ENCODE measurements at regions of chr15 and their contacts with region 1.

Region 1: GRCh38 chr15:101088788-101089583 is 162.9 kb downstream of the CHSY1 start:
- DNase-seq: peak; percentile 34 to 98
- H3K4me3 ChIP-seq: no peak overlapping the region
- H3K27ac ChIP-seq: no peak overlapping the region
- H3K4me1 ChIP-seq: peaks cover 0 to 1% (median 0%) of the 10 kb centered on the region in 4 experiments; a peak in 3 of 7 replicates
- H3K27me3 ChIP-seq: no peaks in the 10 kb centered on the region
- CTCF ChIP-seq: peak; percentile 89 to 95 (median 89)
- EP300 ChIP-seq: 0 out of 3 replicates have a peak, but pooled peaks of 1 of the 2 experiments have one; percentile 37
- POLR2A ChIP-seq: no peak
- RAD21 ChIP-seq: peak; percentile 81 to 91

Region 2: DNA sequence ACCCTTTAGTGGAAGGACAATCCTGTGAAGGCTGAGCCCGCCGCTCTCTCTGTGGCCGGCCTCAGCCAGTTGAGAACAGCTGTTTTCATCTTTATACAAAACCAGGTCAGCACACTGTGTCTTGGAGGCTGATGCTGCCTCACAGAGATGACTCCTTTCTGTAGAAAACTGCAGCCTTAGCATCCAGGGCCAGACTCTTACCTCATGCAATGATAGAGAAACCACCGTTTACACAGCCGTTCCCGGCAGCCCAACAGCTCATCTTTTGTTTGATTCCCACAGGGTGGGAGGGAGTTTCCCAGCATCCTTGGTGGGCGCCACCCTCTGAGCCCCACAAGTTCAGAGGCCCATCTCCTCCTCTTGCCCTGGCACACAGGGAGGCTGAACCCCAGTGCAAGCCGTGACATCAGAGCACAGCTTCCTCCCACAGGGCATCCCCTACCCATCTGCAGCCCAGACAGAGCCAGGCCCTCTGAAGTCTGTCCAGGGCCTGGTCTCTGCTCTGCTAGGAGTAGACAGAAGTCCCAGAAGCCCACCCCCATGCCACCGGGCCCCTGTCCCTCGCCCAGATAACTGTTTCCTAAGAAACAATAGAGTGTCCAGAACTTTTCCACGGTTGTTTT is 64.8 kb before region 1 on chr15:
- CTCF ChIA-PET with region 1: interaction called, 16 read pairs
- POLR2A ChIA-PET with region 1: no interaction called
- DNase-seq: no peak
- H3K4me3 ChIP-seq: no peak overlapping the region
- H3K27ac ChIP-seq: no peak overlapping the region
- H3K4me1 ChIP-seq: no peaks in the 10 kb centered on the region; a peak in 1 of 7 replicates
- H3K27me3 ChIP-seq: no peaks in the 10 kb centered on the region
- CTCF ChIP-seq: no peak
- EP300 ChIP-seq: no peak
- POLR2A ChIP-seq: no peak
- RAD21 ChIP-seq: no peak

Region 3: GRCh38 chr15:101062471-101063171 is 26.4 kb before region 1 on chr15:
- CTCF ChIA-PET with region 1: interaction called, 30 read pairs
- POLR2A ChIA-PET with region 1: interaction called, 13 read pairs
- DNase-seq: peak in 1 of 2 experiments; percentile 63
- H3K4me3 ChIP-seq: no peak overlapping the region
- H3K27ac ChIP-seq: no peak overlapping the region
- H3K4me1 ChIP-seq: peaks cover 13 to 33% (median 21%) of the 10 kb centered on the region in 4 experiments
- H3K27me3 ChIP-seq: no peaks in the 10 kb centered on the region
- CTCF ChIP-seq: no peak
- EP300 ChIP-seq: no peak
- POLR2A ChIP-seq: no peak
- RAD21 ChIP-seq: no peak

Region 4: DNA sequence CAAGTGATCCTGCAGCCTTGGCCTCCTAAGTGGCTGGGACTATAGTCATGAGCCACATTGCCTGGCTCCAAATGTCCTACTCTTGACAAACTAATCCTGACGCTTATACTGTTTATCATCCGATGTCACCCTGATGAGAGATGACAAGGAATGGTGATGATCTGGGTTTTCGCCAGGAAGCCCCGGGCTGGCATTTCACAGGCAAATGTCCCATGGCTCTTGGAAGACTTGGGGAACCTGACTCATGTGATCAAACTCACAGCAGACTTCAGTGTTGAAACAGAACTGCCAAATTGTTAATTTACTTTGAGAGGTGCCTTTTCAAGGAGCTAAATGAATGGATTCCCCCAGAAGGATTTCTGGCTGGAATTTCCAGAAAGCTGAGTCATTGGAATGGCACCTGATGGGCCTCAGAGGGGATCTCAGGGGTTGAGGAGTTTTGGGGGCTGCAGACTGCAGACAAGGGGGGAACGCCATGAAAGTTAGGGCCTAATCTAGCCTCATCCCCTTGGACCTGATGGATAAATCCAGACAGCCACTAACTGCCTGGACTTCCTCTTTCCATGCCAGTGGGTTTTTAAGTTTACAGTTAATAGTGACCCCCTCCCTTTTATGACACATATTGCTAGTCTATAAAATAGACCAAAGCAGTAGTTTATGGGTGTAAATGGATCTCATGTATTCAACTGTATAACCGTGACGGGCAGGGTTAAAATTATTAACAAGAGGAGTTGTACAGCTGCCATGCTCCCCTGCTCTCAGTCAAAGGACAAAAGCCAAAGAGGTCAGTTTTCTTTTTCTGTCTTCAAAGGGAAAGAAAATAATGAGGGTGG is 16.3 kb after region 1 on chr15:
- CTCF ChIA-PET with region 1: interaction called, 20 read pairs
- POLR2A ChIA-PET with region 1: no interaction called
- DNase-seq: no peak
- H3K4me3 ChIP-seq: no peak overlapping the region
- H3K27ac ChIP-seq: no peak overlapping the region
- H3K4me1 ChIP-seq: peaks cover 0 to 3% (median 0%) of the 10 kb centered on the region in 4 experiments; a peak in 1 of 7 replicates
- H3K27me3 ChIP-seq: no peaks in the 10 kb centered on the region
- CTCF ChIP-seq: no peak
- EP300 ChIP-seq: no peak
- POLR2A ChIP-seq: no peak
- RAD21 ChIP-seq: no peak

Measured in H1 (cell line).